Heart left ventricle (tissue), 16 donors: ENCODE measurements at regions of chr4 and their contacts with region 1.

Region 1: GRCh38 chr4:154989511-154989910 is 208.4 kb downstream of the RBM46 start:
- DNase-seq: no peak
- ATAC-seq: no peak
- H3K4me3 ChIP-seq: no peak overlapping the region
- H3K27ac ChIP-seq: no peak overlapping the region
- H3K4me1 ChIP-seq: no peaks in the 10 kb centered on the region
- H3K27me3 ChIP-seq: peaks cover 0 to 3% (median 0%) of the 10 kb centered on the region in 9 donors
- CTCF ChIP-seq: no peak
- POLR2A ChIP-seq: no peak

Region 2: GRCh38 chr4:154999950-155000578 is 10.6 kb after region 1 on chr4:
- intact Hi-C with region 1: loop called in 1 of 10 experiments (anchors 1 kb)
- DNase-seq: no peak
- ATAC-seq: no peak
- H3K4me3 ChIP-seq: no peak overlapping the region
- H3K27ac ChIP-seq: no peak overlapping the region
- H3K4me1 ChIP-seq: no peaks in the 10 kb centered on the region
- H3K27me3 ChIP-seq: no peaks in the 10 kb centered on the region
- CTCF ChIP-seq: no peak
- POLR2A ChIP-seq: no peak